B cell (primary cell): ENCODE measurements at regions of chr17 and their contacts with region 1.

Region 1: DNA sequence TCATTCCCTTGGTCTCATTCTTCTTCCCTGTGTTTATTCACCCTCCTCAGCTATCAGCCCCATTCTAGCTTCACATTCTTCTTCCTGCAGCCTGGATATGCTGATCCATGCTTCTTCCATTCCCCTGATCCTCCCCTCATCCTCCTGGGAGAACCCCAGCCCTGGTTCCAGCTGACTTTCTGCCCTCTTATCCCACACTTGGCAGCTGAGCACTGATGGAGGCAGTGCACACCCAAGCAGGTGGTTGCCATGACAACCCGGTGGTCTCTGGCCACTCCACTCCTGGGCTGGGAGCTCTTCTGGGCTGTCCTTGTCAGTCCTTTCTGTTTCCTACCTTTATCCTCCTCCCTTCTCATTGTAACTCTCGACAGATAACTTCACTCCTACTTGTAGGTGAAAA is 16.7 kb upstream of the TUBG2 start:
- DNase-seq: no peak
- ATAC-seq: no peak
- H3K4me3 ChIP-seq: no peak overlapping the region
- H3K4me3 Mint-ChIP-seq: no peak overlapping the region
- H3K27ac ChIP-seq: no peak overlapping the region
- H3K27ac Mint-ChIP-seq: no peak overlapping the region
- H3K4me1 ChIP-seq: no peaks in the 10 kb centered on the region
- H3K4me1 Mint-ChIP-seq: no peaks in the 10 kb centered on the region
- H3K27me3 ChIP-seq: peaks cover 0 to 24% (median 6%) of the 10 kb centered on the region in 4 experiments
- H3K27me3 Mint-ChIP-seq: peaks cover 13% of the 10 kb centered on the region
- CTCF ChIP-seq: no peak

Region 2: DNA sequence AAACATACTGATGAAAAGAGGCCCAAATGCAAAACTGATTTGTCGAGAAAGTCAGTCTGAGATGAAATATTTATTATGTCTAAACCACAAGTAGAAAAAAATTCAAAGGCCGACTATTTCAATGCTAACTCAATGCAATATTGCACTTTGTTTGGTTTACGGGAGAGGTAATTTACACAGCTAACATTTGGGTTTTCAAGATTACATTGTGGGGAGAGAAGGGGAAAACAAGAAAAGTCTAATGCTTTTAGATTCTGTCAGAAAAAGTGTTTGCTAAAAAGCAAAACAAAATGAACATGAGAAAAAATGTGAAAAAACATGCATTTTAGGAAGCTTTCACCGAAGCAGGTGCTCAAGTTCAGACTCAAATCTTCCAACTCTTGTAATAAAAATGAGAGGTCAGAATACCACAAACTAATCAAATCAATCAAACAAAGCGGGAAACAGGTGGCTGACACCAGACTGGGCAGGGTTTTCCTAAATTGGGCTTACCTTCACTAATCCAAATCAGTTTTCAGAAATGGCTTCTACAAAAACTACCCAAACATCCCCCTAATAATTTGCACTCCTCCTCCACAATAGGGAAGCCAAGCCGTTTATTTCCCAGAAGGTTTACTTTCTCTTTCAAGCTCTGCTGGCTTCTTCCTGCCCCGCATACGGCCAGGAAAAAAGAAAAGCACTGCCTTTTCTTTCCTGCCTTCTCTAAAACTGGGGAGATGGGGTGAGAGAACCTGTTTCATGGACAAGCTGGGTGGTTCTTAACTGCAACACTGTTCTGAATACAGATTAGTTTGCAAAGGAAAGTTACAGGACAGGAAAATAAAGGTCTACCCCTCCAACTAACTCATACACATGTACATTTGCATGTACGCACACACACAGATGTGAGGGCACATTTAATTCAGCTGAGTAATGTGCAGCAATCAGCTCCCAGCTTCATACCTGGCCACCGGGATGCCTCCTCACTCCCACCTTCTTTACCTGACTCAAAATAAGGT is 263.4 kb before region 1 on chr17:
- CTCF ChIA-PET with region 1: no interaction called
- POLR2A ChIA-PET with region 1: interaction called, 11 read pairs
- intact Hi-C with region 1: no loop called
- DNase-seq: peak; percentile 54
- ATAC-seq: peak; percentile 76
- H3K4me3 ChIP-seq: peak overlapping the region in 4 of 5 experiments; percentile 17 to 55 (median 34)
- H3K4me3 Mint-ChIP-seq: peak overlapping the region; percentile 86
- H3K27ac ChIP-seq: peak overlapping the region; percentile 38 to 73
- H3K27ac Mint-ChIP-seq: peak overlapping the region; percentile 81
- H3K4me1 ChIP-seq: peaks cover 17 to 25% of the 10 kb centered on the region in 2 donors
- H3K4me1 Mint-ChIP-seq: peaks cover 63% of the 10 kb centered on the region
- H3K27me3 ChIP-seq: no peaks in the 10 kb centered on the region
- H3K27me3 Mint-ChIP-seq: no peaks in the 10 kb centered on the region
- CTCF ChIP-seq: no peak

Region 3: GRCh38 chr17:42700586-42701289 is 58.4 kb after region 1 on chr17:
- CTCF ChIA-PET with region 1: no interaction called
- POLR2A ChIA-PET with region 1: interaction called, 11 read pairs
- intact Hi-C with region 1: no loop called
- DNase-seq: no peak
- ATAC-seq: no peak
- H3K4me3 ChIP-seq: no peak overlapping the region
- H3K4me3 Mint-ChIP-seq: no peak overlapping the region
- H3K27ac ChIP-seq: no peak overlapping the region
- H3K27ac Mint-ChIP-seq: no peak overlapping the region
- H3K4me1 ChIP-seq: peaks cover 21 to 46% of the 10 kb centered on the region in 2 donors
- H3K4me1 Mint-ChIP-seq: peaks cover 36% of the 10 kb centered on the region
- H3K27me3 ChIP-seq: no peaks in the 10 kb centered on the region
- H3K27me3 Mint-ChIP-seq: no peaks in the 10 kb centered on the region
- CTCF ChIP-seq: no peak